Naive thymus-derived CD4-positive, alpha-beta T cell (primary cell): ENCODE measurements at regions of chr16 and their contacts with region 1.

Region 1: DNA sequence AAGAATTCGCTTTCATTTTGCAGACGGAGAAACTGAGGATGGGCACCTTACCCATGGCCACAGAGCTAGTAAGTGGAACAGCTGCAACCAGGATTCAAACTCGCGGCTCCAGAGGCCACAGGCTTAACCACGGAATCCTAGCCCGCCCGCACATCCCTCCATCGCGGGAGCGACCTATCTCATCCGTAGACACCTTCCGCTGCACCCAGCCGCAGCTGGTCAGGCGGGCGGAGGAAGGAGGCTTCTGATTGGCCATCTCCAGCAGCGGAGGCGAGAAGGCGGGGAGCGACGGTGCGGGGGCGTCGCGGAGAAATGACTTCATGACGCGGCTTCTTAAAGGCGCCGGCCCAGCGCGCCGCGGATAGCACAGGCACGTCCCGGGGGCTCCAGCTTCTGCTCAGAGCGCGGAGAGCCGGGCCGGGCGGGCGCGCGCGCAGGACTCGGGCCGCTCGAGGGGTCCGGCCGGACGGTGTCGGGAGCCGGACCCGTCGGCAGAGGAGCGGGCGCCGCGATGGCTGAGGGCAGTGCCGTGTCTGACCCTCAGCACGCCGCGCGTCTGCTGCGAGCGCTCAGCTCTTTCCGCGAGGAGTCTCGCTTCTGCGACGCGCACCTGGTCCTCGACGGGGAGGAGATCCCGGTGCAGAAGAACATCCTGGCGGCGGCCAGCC is at the start of gene GAN:
- DNase-seq: peak; percentile 83 to 96 (median 93)
- ATAC-seq: peak; percentile 99
- H3K4me3 ChIP-seq: peak within 1 kb of the TSS; percentile 89
- H3K4me3 Mint-ChIP-seq: peak within 1 kb of the TSS; percentile 89 to 99 (median 96)
- H3K27ac ChIP-seq: peak within 1 kb of the TSS; percentile 78
- H3K27ac Mint-ChIP-seq: peak within 1 kb of the TSS; percentile 85 to 98 (median 94)
- H3K4me1 ChIP-seq: peaks cover 15 to 17% of the 10 kb centered on the region in 2 donors
- H3K4me1 Mint-ChIP-seq: peaks cover 37 to 70% (median 59%) of the 10 kb centered on the region in 7 donors
- H3K27me3 ChIP-seq: no peaks in the 10 kb centered on the region
- H3K27me3 Mint-ChIP-seq: no peaks in the 10 kb centered on the region
- total RNA-seq, gene GAN: 5.1 to 11.3 (median 7.9) TPM

Region 2: GRCh38 chr16:81006814-81007696 is 307.7 kb before region 1 on chr16 and contains the starts of genes CENPN and CMC2:
- CTCF ChIA-PET with region 1: no interaction called
- POLR2A ChIA-PET with region 1: no interaction called
- intact Hi-C with region 1: loop called (anchors 1 kb)
- DNase-seq: peak; percentile 98 to 100 (median 99)
- ATAC-seq: peak; percentile 89
- H3K4me3 ChIP-seq: peak within 1 kb of the TSS; percentile 83
- H3K4me3 Mint-ChIP-seq: peak within 1 kb of the TSS; percentile 83 to 100 (median 96)
- H3K27ac ChIP-seq: peak within 1 kb of the TSS; percentile 95
- H3K27ac Mint-ChIP-seq: peak within 1 kb of the TSS; percentile 97 to 100 (median 100)
- H3K4me1 ChIP-seq: peaks cover 20 to 21% of the 10 kb centered on the region in 2 donors
- H3K4me1 Mint-ChIP-seq: peaks cover 21 to 70% (median 40%) of the 10 kb centered on the region in 7 donors
- H3K27me3 ChIP-seq: no peaks in the 10 kb centered on the region
- H3K27me3 Mint-ChIP-seq: no peaks in the 10 kb centered on the region
- total RNA-seq, gene CENPN: 1.4 to 41.8 (median 6.9) TPM
- total RNA-seq, gene CMC2: 28.3 to 78.4 (median 40.8) TPM

Region 3: DNA sequence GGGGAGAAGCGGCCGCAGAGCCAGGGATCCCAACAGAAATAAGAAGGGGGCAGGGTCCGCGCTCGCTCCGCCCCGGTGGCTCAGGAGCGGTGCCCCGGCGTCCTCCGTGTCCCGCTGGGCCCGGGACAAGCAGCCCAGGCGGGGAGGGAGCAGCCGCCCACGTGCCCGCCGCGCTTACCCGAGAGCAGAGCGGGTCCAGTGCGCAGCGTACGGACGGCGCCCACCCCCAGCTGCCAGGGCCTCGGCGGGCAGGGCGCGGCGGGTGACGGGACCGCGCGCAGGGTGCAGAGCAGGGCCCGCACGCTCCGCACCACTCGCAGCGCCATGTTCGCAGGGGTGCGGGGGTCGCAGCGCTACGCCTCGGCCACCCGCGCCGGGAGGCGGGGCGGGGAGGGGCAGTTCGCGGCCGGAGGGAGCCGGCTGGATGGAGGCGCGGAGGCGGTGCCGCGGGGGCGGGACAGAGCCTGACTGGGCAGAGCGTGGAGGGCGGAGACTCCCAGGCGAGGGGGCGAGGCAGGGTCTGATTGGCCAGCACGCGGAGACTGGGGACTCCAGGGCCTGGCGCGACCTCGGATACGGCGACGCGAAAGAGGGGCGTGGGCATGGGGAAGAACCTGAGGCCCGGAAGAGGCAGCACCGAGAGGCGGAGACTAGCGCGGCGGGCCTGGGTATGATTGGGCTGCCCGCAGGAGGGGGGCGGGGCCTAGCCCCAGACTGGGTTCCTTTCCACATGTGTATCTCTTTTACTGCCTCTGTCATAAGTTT is 218.6 kb before region 1 on chr16 and contains the start of gene GCSH:
- CTCF ChIA-PET with region 1: no interaction called
- POLR2A ChIA-PET with region 1: no interaction called
- intact Hi-C with region 1: loop called (anchors 1 kb)
- DNase-seq: peak; percentile 94 to 99 (median 98)
- ATAC-seq: peak; percentile 98
- H3K4me3 ChIP-seq: peak within 1 kb of the TSS; percentile 71
- H3K4me3 Mint-ChIP-seq: peak within 1 kb of the TSS; percentile 72 to 93 (median 82)
- H3K27ac ChIP-seq: peak within 1 kb of the TSS; percentile 67
- H3K27ac Mint-ChIP-seq: peak within 1 kb of the TSS; percentile 45 to 87 (median 71)
- H3K4me1 ChIP-seq: peaks cover 0 to 6% of the 10 kb centered on the region in 2 donors
- H3K4me1 Mint-ChIP-seq: peaks cover 3 to 19% (median 9%) of the 10 kb centered on the region in 7 donors
- H3K27me3 ChIP-seq: no peaks in the 10 kb centered on the region
- H3K27me3 Mint-ChIP-seq: no peaks in the 10 kb centered on the region
- total RNA-seq, gene GCSH: 1.5 to 7.5 (median 4.9) TPM

Region 4: DNA sequence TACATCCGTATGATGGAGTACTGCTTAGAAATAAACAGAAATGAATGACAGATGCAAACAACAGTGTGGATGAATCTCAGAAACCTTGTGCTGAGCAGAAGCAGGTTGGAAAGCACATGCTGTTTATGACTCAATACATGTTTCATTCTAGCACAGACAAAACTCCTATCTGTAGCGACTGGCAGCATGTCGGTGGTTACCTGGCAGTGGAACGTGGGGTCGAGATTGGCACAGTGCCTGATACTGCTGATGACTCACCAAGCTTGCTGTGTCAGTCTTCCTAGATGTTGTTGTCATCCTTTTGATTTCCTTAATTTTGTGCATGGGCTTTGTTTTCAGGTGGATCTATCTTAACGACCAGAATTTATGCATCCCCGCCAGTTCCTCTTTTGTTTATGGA is 62.1 kb after region 1 on chr16:
- CTCF ChIA-PET with region 1: no interaction called
- POLR2A ChIA-PET with region 1: no interaction called
- intact Hi-C with region 1: no loop called
- DNase-seq: no peak
- ATAC-seq: no peak
- H3K4me3 ChIP-seq: no peak overlapping the region
- H3K4me3 Mint-ChIP-seq: no peak overlapping the region
- H3K27ac ChIP-seq: no peak overlapping the region
- H3K27ac Mint-ChIP-seq: no peak overlapping the region
- H3K4me1 ChIP-seq: no peaks in the 10 kb centered on the region
- H3K4me1 Mint-ChIP-seq: peaks cover 0 to 6% (median 5%) of the 10 kb centered on the region in 7 donors
- H3K27me3 ChIP-seq: no peaks in the 10 kb centered on the region
- H3K27me3 Mint-ChIP-seq: no peaks in the 10 kb centered on the region

Region 5: DNA sequence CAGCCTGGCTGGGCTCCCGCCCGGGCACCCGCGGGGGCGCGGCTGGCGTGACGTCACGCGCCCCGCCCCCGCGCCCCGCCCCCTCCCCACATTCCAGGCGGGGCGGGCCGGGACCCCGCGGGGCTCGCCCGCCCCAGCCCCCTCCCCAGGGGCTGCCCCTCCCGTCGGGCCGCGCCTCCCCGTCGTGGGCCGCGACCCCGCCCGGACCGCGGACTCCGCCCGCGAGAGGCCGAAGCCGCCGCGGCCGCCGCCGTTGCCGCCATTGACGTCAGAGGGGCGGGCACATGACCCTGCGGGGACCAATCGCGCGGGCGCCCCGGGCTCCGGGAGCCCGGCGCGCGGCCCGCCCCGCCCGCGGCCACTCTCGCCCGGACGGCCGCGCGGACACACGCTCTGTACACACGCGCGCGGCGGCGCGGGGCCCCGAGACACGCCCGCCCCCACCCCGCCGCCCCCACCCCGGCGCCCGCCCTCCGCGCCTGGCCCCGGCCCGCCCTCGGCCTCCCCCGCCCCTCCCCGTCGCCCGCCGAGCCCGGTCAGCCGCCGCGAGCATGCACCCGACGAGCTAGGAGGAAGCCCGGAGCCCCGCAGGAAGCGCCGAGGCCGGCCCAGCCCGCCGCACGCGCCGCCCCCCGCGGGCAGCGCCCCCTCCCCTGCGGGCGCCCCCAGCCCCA is 129.8 kb after region 1 on chr16 and contains the start of gene CMIP:
- CTCF ChIA-PET with region 1: no interaction called
- POLR2A ChIA-PET with region 1: interaction called, 3 read pairs
- intact Hi-C with region 1: loop called (anchors 2 to 5 kb)
- DNase-seq: peak; percentile 66 to 89 (median 79)
- ATAC-seq: peak; percentile 88
- H3K4me3 ChIP-seq: peak within 1 kb of the TSS; percentile 91
- H3K4me3 Mint-ChIP-seq: peak within 1 kb of the TSS; percentile 85 to 94 (median 90)
- H3K27ac ChIP-seq: peak within 1 kb of the TSS; percentile 77
- H3K27ac Mint-ChIP-seq: peak within 1 kb of the TSS; percentile 90 to 97 (median 94)
- H3K4me1 ChIP-seq: peaks cover 35 to 37% of the 10 kb centered on the region in 2 donors
- H3K4me1 Mint-ChIP-seq: peaks cover 26 to 54% (median 48%) of the 10 kb centered on the region in 7 donors
- H3K27me3 ChIP-seq: no peaks in the 10 kb centered on the region
- H3K27me3 Mint-ChIP-seq: peaks cover 0 to 41% (median 0%) of the 10 kb centered on the region in 5 donors
- total RNA-seq, gene CMIP: 28.9 to 75.4 (median 38.2) TPM

Region 6: DNA sequence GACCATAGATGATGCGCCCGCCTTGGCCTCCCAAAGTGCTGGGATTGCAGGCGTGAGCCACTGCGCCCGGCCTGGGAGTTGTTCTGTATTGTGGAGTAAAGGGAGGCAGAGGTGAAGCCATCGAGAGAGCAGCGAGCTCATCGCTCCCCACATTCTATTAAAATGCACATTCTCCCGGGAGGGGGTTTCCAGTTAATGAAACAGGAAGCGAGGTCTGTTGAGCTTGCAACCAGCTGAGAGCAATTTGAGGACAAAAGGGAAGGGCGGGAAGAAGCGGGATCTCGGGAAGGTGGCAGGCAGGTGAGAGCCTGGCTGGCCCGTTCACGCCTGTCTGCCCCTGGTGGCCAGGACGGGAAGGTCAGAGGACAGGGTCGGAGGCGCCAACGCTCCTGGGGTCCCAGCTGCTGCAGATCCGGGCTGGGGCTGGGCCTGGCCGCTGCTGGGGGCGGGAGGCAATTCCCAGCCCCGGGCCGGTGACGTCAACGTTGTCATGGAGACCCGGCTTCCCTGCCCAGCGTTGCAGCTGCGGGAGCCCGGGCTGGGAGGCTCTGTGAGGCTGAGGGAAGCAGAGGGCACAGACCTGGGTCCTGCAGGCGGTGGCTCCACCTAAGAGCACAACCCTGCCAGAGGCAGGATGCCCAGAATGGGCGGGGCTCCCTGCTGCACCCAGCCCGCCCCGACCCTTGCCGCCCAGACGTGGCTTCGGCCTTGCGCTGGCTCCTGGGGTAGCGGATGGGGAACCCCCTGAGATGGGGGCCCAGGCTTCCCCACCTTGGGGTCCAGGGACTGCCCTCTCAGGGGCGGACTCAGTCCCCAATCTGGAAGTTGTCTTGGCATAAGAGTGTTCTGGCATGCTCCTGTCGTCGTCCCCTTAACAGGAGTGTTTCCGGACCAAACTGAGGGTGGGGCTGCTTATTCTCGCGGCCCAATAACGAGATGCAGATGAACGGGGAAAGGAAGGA is 415.6 kb after region 1 on chr16:
- CTCF ChIA-PET with region 1: no interaction called
- POLR2A ChIA-PET with region 1: no interaction called
- intact Hi-C with region 1: loop called in 1 of 2 experiments (anchors 2 kb)
- DNase-seq: peak; percentile 31 to 65 (median 57)
- ATAC-seq: peak; percentile 89
- H3K4me3 ChIP-seq: peak overlapping the region; percentile 56
- H3K4me3 Mint-ChIP-seq: peak overlapping the region; percentile 80 to 91 (median 85)
- H3K27ac ChIP-seq: peak overlapping the region; percentile 76
- H3K27ac Mint-ChIP-seq: peak overlapping the region; percentile 82 to 93 (median 88)
- H3K4me1 ChIP-seq: peaks cover 3 to 8% of the 10 kb centered on the region in 2 donors
- H3K4me1 Mint-ChIP-seq: peaks cover 12 to 18% (median 17%) of the 10 kb centered on the region in 7 donors
- H3K27me3 ChIP-seq: no peaks in the 10 kb centered on the region
- H3K27me3 Mint-ChIP-seq: peaks cover 0 to 8% (median 0%) of the 10 kb centered on the region in 5 donors

Region 7: DNA sequence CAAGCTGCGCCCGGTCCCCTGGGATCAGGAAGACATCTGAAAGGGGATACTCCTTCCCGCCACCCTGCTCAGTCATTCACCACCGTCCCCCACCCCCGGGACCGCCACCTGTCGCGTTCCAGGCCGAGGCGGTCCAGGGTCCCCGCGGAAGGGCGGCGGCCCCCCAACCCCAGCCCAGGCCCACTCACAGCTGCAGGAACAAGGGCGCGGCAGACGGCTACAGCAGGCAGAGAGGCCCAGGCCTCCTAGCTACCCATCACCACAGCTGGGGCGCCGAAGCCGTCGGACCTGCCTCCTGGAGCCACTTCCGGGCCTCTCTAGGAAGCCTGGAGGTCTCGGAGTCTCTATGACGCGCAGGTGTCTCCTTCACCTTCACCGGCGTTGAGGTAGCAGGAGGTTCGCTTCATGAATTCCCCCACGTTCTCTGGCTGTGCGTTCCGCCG is 696.5 kb after region 1 on chr16 and contains the start of gene SDR42E1:
- CTCF ChIA-PET with region 1: no interaction called
- POLR2A ChIA-PET with region 1: no interaction called
- intact Hi-C with region 1: loop called in 1 of 2 experiments (anchors 2 kb)
- DNase-seq: peak; percentile 37 to 80 (median 68)
- ATAC-seq: peak; percentile 93
- H3K4me3 ChIP-seq: peak within 1 kb of the TSS; percentile 75
- H3K4me3 Mint-ChIP-seq: peak within 1 kb of the TSS; percentile 80 to 99 (median 91)
- H3K27ac ChIP-seq: peak within 1 kb of the TSS; percentile 67
- H3K27ac Mint-ChIP-seq: peak within 1 kb of the TSS; percentile 77 to 96 (median 89)
- H3K4me1 ChIP-seq: no peaks in the 10 kb centered on the region
- H3K4me1 Mint-ChIP-seq: peaks cover 12 to 28% (median 22%) of the 10 kb centered on the region in 7 donors
- H3K27me3 ChIP-seq: peaks cover 0 to 5% of the 10 kb centered on the region in 2 donors
- H3K27me3 Mint-ChIP-seq: peaks cover 12 to 30% (median 13%) of the 10 kb centered on the region in 5 donors
- total RNA-seq, gene SDR42E1: 4.1 to 12.1 (median 8.2) TPM